Activated CD4-positive, alpha-beta memory T cell treated with anti-CD3 and anti-CD28 coated beads for 36 hours (primary cell): ENCODE measurements at regions of chr15 and their contacts with region 1.

Region 1: GRCh38 chr15:84748274-84749110 is at the start of gene ZNF592:
- DNase-seq: peak; percentile 84
- H3K4me3 Mint-ChIP-seq: peak within 1 kb of the TSS; percentile 97
- H3K27ac Mint-ChIP-seq: peak within 1 kb of the TSS; percentile 98
- H3K4me1 Mint-ChIP-seq: peaks cover 57% of the 10 kb centered on the region
- H3K27me3 Mint-ChIP-seq: no peaks in the 10 kb centered on the region
- total RNA-seq, gene ZNF592: 23.8 to 24.3 TPM

Region 2: GRCh38 chr15:84761607-84762131 is 13.2 kb after region 1 on chr15:
- CTCF ChIA-PET with region 1: interaction called, 5 read pairs
- POLR2A ChIA-PET with region 1: interaction called, 3 read pairs
- intact Hi-C with region 1: loop called (anchors 1 kb)
- DNase-seq: no peak
- H3K4me3 Mint-ChIP-seq: no peak overlapping the region
- H3K27ac Mint-ChIP-seq: no peak overlapping the region
- H3K4me1 Mint-ChIP-seq: peaks cover 22% of the 10 kb centered on the region
- H3K27me3 Mint-ChIP-seq: no peaks in the 10 kb centered on the region